PC-3 (cell line): ENCODE measurements at regions of chr7 and their contacts with region 1.

Region 1: DNA sequence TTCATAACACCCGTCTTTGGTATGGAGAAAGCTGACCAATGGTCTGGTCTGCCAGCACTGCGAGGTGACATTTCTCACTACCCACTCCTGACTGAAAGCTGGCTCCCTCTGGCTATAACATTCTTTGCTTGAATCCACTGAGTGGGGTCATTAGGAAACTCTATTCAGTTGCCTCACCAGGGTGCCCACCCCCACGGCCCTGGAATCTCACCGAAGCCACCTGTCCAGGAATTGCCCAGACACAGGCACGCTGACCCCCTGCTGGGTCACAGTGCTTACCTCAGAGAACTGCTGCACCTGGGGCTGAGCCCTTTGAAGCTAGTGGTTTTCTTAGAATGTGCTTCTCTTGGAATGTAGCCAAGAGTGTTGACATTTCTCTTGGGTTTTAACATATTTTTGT is 28.6 kb downstream of the HECW1 start:
- DNase-seq: no peak
- ATAC-seq: no peak
- H3K4me3 ChIP-seq: no peak overlapping the region
- H3K27ac ChIP-seq: no peak overlapping the region
- H3K4me1 ChIP-seq: peaks cover 12% of the 10 kb centered on the region
- H3K27me3 ChIP-seq: no peaks in the 10 kb centered on the region
- CTCF ChIP-seq: no peak

Region 2: GRCh38 chr7:43199371-43200160 is 58.5 kb after region 1 on chr7:
- CTCF ChIA-PET with region 1: no interaction called
- POLR2A ChIA-PET with region 1: no interaction called
- intact Hi-C with region 1: loop called (anchors 5 kb)
- DNase-seq: peak; percentile 61
- ATAC-seq: peak; percentile 84
- H3K4me3 ChIP-seq: peak overlapping the region; percentile 15; the same call in 1 of the 2 replicates
- H3K27ac ChIP-seq: peak overlapping the region; percentile 24
- H3K4me1 ChIP-seq: peaks cover 32% of the 10 kb centered on the region
- H3K27me3 ChIP-seq: no peaks in the 10 kb centered on the region
- CTCF ChIP-seq: no peak

Region 3: DNA sequence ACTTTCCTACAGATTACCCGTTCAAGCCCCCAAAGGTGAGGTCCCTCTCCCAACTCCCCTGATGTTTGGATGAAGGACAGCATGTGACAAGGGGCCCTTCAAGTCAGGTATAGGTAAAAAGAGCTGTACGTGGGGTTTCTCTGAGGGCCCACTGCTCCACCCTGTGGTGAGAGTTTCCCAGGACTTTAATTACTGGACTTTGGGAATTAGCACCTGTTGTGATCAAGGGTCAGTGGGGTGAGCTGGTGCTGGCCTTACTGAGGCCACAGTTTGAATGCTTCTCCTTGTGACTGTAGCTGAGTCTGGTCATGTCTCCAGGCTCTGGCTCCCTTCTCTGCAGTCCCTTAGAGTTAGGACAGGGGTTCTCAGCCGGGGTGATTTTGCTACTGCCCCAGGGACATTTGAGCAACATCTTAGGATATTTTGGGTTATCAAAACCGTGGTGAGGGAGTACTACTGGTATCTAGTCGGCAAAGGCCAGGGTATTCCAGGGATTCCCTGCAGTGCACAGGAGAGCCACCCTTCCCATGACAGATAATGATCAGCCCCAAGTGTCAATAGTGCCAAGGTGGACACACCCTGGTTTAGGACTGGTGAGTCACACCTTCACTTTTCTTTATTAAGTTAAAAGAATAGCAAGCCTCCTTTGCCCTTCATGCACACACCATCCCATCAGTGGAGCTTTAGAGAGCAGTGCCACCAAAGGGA is 802.1 kb after region 1 on chr7:
- CTCF ChIA-PET with region 1: no interaction called
- POLR2A ChIA-PET with region 1: no interaction called
- intact Hi-C with region 1: no loop called
- DNase-seq: peak; percentile 79
- ATAC-seq: peak; percentile 97
- H3K4me3 ChIP-seq: no peak overlapping the region
- H3K27ac ChIP-seq: peak overlapping the region; percentile 76
- H3K4me1 ChIP-seq: peaks cover 16% of the 10 kb centered on the region
- H3K27me3 ChIP-seq: no peaks in the 10 kb centered on the region
- CTCF ChIP-seq: peak; percentile 54